Activated CD4-positive, alpha-beta T cell treated with anti-CD3 and anti-CD28 coated beads, Interleukin-2, amount 10 ng/mL, durations not matched to agents 24 days and 14 days (primary cell): ENCODE measurements at regions of chr17 and their contacts with region 1.

Region 1: DNA sequence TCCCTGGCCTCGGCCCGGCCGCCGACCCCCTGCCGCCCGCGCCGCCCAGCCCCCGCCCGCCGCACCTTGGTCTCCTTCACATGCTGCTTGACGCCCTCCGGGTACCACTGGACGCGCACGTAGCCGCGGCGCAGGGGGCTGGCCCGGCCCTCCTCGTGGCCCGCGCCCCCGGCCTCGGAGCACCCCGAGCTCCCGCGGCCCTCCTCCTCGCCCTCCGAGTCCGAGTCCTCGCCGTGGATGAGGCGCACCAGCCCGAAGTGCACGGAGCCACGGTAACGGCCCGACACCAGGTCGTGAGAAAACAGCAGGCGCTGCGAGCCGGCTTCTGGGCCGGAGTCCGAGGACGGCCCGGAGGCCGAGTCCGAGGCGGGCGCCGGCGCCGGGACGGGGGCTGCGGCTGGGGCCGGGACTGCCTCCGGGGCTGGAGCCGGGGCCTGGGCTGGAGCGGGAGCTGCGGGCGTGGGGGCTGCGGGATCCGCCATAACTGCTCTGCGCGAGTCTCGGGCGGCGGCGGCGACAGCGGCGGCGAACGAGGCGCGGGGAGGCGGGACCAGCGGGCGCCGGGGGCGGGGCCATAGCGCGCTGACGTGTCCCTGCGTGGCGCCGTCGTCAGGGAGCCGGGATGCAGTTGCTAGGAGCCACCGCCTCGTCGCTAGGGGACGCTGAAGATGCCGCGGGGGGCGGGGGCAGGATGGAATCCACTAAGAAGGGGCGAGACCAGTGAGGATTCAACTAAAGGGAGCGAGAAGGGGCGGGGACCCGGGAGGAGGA is at the start of gene UBE2O:
- DNase-seq: peak; percentile 99
- H3K4me3 Mint-ChIP-seq: peak within 1 kb of the TSS; percentile 93
- H3K27ac Mint-ChIP-seq: peak within 1 kb of the TSS; percentile 62
- H3K4me1 Mint-ChIP-seq: peaks cover 32% of the 10 kb centered on the region
- H3K27me3 Mint-ChIP-seq: peaks cover 4% of the 10 kb centered on the region
- total RNA-seq, gene UBE2O: 43.8 and 44.0 TPM in 2 replicates

Region 2: DNA sequence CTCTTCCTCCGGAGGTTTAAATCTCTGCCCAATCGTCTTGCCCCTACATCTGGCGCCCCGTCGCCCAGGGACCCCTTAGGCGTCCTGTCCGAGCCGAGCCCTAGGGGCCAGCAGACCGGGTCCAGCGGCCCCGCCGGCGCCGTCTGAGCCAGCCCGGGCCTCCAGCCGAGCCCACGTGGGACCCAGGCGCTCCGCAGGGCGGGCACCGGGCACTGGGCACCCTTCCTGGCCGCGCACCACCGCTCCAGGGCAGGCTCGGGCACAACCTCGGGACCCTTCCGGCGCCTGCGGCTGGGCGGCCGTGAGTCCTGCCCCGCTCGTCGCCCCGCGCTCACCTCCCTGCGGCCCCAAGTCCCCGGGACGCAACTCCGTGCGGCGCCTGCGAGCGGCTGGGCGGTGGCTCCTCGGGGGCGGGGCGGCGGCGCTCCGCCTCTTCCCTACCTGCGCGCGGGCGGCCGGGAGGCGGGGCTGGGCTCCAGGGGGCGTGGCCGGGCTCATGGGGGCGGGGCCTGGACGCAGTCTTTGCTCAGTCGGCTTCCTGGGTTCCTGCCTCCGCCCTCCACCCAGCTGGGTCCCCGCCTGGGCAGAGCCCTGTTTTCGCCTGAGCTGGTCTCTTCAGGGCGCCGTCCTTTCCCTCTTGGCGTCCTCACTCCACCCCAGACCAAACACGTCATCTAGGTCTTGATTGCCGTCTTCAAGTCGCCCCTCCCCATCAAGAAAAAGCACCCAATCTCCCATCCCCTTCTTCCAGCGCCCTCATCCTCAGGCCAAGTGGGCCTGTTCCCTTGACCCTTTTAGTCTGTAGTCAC is 48.4 kb after region 1 on chr17 and contains the start of gene RHBDF2:
- intact Hi-C with region 1: loop called (anchors 5 kb)
- DNase-seq: peak; percentile 99
- H3K4me3 Mint-ChIP-seq: peak within 1 kb of the TSS; percentile 81
- H3K27ac Mint-ChIP-seq: peak within 1 kb of the TSS; percentile 90
- H3K4me1 Mint-ChIP-seq: peaks cover 47% of the 10 kb centered on the region
- H3K27me3 Mint-ChIP-seq: no peaks in the 10 kb centered on the region
- total RNA-seq, gene RHBDF2: 45.4 and 54.5 TPM in 2 replicates

Region 3: GRCh38 chr17:76700617-76701470 is 248.0 kb after region 1 on chr17:
- intact Hi-C with region 1: no loop called
- DNase-seq: no peak
- H3K4me3 Mint-ChIP-seq: no peak overlapping the region
- H3K27ac Mint-ChIP-seq: no peak overlapping the region
- H3K4me1 Mint-ChIP-seq: no peaks in the 10 kb centered on the region
- H3K27me3 Mint-ChIP-seq: peaks cover 2% of the 10 kb centered on the region

Region 4: GRCh38 chr17:76726231-76726775 is 273.5 kb after region 1 on chr17 and contains the start of gene JMJD6:
- intact Hi-C with region 1: no loop called
- DNase-seq: peak; percentile 98
- H3K4me3 Mint-ChIP-seq: peak within 1 kb of the TSS; percentile 96
- H3K27ac Mint-ChIP-seq: peak within 1 kb of the TSS; percentile 97
- H3K4me1 Mint-ChIP-seq: peaks cover 39% of the 10 kb centered on the region
- H3K27me3 Mint-ChIP-seq: no peaks in the 10 kb centered on the region
- total RNA-seq, gene JMJD6: 82.5 and 86.3 TPM in 2 replicates